T-cell (primary cell): ENCODE measurements at regions of chr5 and their contacts with region 1.

Region 1: GRCh38 chr5:176466245-176466871 is 18.2 kb downstream of the FAF2 start:
- DNase-seq: no peak
- ATAC-seq: no peak
- H3K4me3 ChIP-seq: no peak overlapping the region
- H3K4me3 Mint-ChIP-seq: no peak overlapping the region
- H3K27ac ChIP-seq: no peak overlapping the region
- H3K27ac Mint-ChIP-seq: no peak overlapping the region
- H3K4me1 ChIP-seq: no peaks in the 10 kb centered on the region
- H3K4me1 Mint-ChIP-seq: peaks cover 25 to 26% (median 25%) of the 10 kb centered on the region in 3 donors
- H3K27me3 ChIP-seq: no peaks in the 10 kb centered on the region
- H3K27me3 Mint-ChIP-seq: no peaks in the 10 kb centered on the region

Region 2: GRCh38 chr5:175597718-175598117 is 868.6 kb before region 1 on chr5:
- CTCF ChIA-PET with region 1: no interaction called
- POLR2A ChIA-PET with region 1: interaction called in 1 of 2 experiments, 11 read pairs
- DNase-seq: no peak
- ATAC-seq: no peak
- H3K4me3 ChIP-seq: no peak overlapping the region
- H3K4me3 Mint-ChIP-seq: no peak overlapping the region
- H3K27ac ChIP-seq: no peak overlapping the region
- H3K27ac Mint-ChIP-seq: no peak overlapping the region
- H3K4me1 ChIP-seq: no peaks in the 10 kb centered on the region
- H3K4me1 Mint-ChIP-seq: no peaks in the 10 kb centered on the region
- H3K27me3 ChIP-seq: peaks cover 0 to 5% of the 10 kb centered on the region in 2 experiments
- H3K27me3 Mint-ChIP-seq: peaks cover 0 to 13% of the 10 kb centered on the region in 2 donors

Region 3: GRCh38 chr5:176481711-176482110 is 15.4 kb after region 1 on chr5:
- CTCF ChIA-PET with region 1: interaction called in 1 of 2 experiments, 10 read pairs
- POLR2A ChIA-PET with region 1: interaction called in 1 of 2 experiments, 3 read pairs
- DNase-seq: no peak
- ATAC-seq: no peak
- H3K4me3 ChIP-seq: no peak overlapping the region
- H3K4me3 Mint-ChIP-seq: no peak overlapping the region
- H3K27ac ChIP-seq: no peak overlapping the region
- H3K27ac Mint-ChIP-seq: no peak overlapping the region
- H3K4me1 ChIP-seq: peaks cover 0 to 3% of the 10 kb centered on the region in 2 experiments
- H3K4me1 Mint-ChIP-seq: peaks cover 32 to 40% (median 33%) of the 10 kb centered on the region in 3 donors
- H3K27me3 ChIP-seq: no peaks in the 10 kb centered on the region
- H3K27me3 Mint-ChIP-seq: no peaks in the 10 kb centered on the region

Region 4: DNA sequence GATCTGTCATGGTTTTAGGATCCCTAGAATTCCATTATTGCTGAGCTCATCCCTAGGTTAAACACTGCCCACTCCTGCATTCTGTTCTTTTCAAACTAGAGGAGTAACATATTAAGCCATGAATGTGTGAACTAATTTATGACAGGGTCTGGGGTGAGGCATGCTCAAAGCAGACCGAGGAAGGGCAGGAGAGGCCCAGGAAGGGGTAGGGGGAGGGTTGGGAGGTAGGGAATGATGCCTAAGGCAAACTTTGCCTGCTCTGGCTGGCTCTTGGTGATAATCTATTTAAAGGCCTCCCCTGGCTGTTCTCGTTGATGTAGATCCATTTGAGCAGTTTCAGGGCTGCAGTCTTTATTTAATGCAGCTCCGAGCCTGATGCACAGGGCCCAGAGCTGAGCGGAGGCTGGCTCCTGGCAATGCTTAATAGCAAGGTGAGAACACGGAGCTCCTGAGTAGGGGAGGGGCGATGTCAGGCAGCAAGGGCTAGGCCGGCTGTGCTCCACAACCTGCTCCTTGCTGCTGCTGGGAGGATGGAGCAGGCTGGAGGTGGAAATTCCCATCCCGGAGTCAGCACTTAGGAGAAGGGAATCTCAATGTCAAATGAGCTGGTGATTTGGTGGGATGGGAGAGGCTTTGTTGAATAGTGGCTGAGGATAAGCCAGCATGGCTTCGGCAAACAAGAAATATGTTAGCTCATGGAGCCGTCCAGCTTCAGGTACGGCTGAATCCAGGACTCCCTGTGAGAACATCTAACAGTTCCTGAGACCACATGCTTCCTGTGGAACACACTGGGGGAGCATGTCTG is 270.8 kb after region 1 on chr5:
- CTCF ChIA-PET with region 1: no interaction called
- POLR2A ChIA-PET with region 1: no interaction called
- DNase-seq: peak in 1 of 35 experiments; percentile 22
- ATAC-seq: no peak
- H3K4me3 ChIP-seq: no peak overlapping the region
- H3K4me3 Mint-ChIP-seq: no peak overlapping the region
- H3K27ac ChIP-seq: no peak overlapping the region
- H3K27ac Mint-ChIP-seq: no peak overlapping the region
- H3K4me1 ChIP-seq: no peaks in the 10 kb centered on the region
- H3K4me1 Mint-ChIP-seq: peaks cover 2 to 8% (median 3%) of the 10 kb centered on the region in 3 donors
- H3K27me3 ChIP-seq: peaks cover 7 to 86% of the 10 kb centered on the region in 2 experiments
- H3K27me3 Mint-ChIP-seq: peaks cover 49 to 67% of the 10 kb centered on the region in 2 donors